ENCODE measurements at regions of chr12 and their contacts with region 1.

Region 1: GRCh38 chr12:92769124-92769901 is 66.5 kb downstream of the PLEKHG7 start:
- DNase-seq: no peak
- ATAC-seq: no peak
- H3K4me3 Mint-ChIP-seq: no peak overlapping the region
- H3K27ac Mint-ChIP-seq: no peak overlapping the region
- H3K4me1 Mint-ChIP-seq: peaks cover 7% of the 10 kb centered on the region; the same call in 1 of the 2 replicates
- H3K27me3 Mint-ChIP-seq: no peaks in the 10 kb centered on the region
- CTCF ChIP-seq: no peak

Region 2: DNA sequence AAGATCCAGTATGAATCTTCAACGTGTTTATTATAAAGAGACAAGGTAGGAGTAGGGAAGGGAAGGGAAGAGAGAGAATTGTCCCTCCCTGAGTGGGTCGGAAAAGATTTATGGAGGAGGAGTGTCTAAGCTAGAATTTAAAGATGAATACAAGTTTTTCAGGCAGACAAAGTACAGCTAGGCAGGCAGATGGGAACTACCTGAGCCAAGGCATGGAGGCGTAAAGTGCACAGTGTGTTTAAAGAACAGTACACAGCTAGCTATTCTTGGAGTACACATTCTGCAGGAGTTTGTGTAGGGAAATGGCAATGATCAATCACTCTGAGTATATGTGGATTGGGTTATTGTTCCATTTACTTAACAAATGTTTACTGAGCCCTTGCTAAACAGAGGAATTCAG is 46.4 kb before region 1 on chr12:
- CTCF ChIA-PET with region 1: no interaction called
- POLR2A ChIA-PET with region 1: no interaction called
- DNase-seq: no peak
- ATAC-seq: no peak
- H3K4me3 Mint-ChIP-seq: no peak overlapping the region
- H3K27ac Mint-ChIP-seq: no peak overlapping the region
- H3K4me1 Mint-ChIP-seq: no peaks in the 10 kb centered on the region; the same call in 1 of the 2 replicates
- H3K27me3 Mint-ChIP-seq: no peaks in the 10 kb centered on the region
- CTCF ChIP-seq: no peak

Region 3: GRCh38 chr12:93358058-93358457 is 588.7 kb after region 1 on chr12:
- CTCF ChIA-PET with region 1: no interaction called
- POLR2A ChIA-PET with region 1: interaction called, 17 read pairs
- DNase-seq: no peak
- ATAC-seq: no peak
- H3K4me3 Mint-ChIP-seq: no peak overlapping the region
- H3K27ac Mint-ChIP-seq: no peak overlapping the region
- H3K4me1 Mint-ChIP-seq: peaks cover 4% of the 10 kb centered on the region; the same call in 1 of the 2 replicates
- H3K27me3 Mint-ChIP-seq: no peaks in the 10 kb centered on the region
- CTCF ChIP-seq: no peak

Measured in WTC11 (cell line).